MCF 10A (cell line): ENCODE measurements at regions of chr3 and their contacts with region 1.

Region 1: DNA sequence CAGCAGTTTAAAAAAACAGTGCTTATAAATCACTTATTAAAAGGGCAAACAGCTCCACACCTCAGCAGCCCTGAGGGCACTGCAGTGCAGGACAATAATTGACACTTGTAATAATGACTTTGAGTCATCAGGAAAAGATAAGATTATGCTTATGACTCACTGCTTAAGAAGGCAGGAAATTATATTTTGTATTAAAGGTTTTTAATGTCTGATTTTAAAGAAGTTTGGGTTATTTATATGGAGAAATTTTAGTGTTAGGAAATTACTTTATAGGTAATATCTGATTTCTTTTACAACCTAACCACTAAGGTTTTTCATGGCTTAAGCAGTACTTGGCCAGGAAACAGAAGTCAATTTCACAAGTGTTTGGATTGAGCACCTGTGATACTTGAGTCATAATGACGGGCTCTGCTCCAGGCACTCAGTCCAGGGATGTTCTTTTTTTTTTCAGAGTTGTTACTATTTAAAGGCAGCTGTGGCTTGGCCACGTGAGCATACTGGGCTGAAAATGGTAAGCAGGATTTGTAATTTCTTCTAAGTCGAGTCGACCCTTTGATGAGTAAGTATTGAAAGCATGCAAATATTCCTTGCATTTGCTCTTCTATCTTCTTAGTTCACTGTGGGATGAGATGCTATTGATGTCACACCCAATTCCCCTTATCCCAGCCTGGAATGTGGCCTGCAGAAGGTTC is 21.6 kb upstream of the SLC6A20 start:
- DNase-seq: peak; percentile 97
- H3K4me3 Mint-ChIP-seq: no peak overlapping the region
- H3K27ac Mint-ChIP-seq: peak overlapping the region; percentile 73
- H3K4me1 Mint-ChIP-seq: peaks cover 28% of the 10 kb centered on the region
- H3K27me3 Mint-ChIP-seq: no peaks in the 10 kb centered on the region
- CTCF ChIP-seq: no peak

Region 2: DNA sequence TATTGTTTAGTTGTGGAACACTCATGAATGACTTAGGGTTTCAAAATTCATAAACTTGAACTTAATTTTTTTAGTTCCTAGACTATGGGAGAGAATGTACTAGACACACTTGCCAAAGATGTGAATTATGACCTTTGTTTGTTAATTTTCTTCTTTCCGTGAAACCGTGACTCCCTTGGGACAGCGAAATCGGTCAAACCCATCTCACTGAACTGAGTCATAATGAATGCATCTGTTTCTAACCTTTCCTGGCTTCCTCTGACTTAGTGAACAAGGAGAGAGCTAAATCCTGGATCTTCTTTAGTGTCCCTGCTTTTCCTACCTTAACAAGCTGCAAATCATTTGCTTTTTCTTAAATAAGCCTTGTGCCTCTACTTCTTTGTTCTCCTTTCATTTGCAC is 344.1 kb before region 1 on chr3:
- CTCF ChIA-PET with region 1: no interaction called
- POLR2A ChIA-PET with region 1: no interaction called
- intact Hi-C with region 1: no loop called
- DNase-seq: peak; percentile 65
- H3K4me3 Mint-ChIP-seq: no peak overlapping the region
- H3K27ac Mint-ChIP-seq: no peak overlapping the region
- H3K4me1 Mint-ChIP-seq: peaks cover under 1% of the 10 kb centered on the region
- H3K27me3 Mint-ChIP-seq: no peaks in the 10 kb centered on the region
- CTCF ChIP-seq: no peak

Region 3: DNA sequence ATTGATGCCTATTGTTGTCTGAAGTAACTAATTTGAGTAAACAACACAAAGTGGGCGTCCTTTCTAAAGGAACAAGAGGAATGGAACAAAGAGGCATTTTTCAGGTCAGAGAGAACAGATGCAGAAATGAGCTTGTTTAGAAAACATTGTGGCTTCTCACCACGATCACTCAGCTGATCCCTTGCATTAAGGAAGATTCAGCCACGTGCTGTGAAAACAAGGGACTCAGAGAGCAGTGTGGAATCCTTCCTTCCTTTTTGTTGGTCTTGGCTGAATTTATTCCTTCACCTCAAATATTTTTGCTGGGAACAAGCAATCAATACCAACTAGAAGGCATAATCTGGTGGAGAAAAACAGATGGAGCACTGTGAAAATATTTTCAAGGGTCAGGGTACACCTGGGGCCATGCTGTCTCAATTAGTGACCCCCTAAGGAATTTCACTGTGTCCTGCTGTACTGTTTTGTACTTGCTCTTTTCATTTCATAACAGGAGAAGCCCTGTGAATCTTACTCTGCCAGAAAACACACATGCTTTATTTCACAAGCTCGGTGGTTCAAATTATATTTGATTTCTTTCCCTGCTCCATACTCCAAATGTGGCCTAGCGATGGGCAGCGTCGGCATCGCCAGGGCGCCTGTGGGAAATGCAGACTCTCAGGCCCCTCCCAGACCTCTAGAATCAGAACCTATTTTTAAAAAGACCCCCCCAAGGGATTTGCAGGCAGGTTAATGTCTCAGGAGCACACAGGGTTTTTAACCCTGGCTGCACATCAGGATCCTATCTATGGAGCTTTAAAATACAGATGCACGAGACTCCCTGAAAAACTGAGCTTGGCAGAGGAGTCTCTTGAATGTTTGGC is 10.1 kb before region 1 on chr3:
- CTCF ChIA-PET with region 1: interaction called, 4 read pairs
- POLR2A ChIA-PET with region 1: interaction called, 23 read pairs
- intact Hi-C with region 1: no loop called
- DNase-seq: no peak
- H3K4me3 Mint-ChIP-seq: no peak overlapping the region
- H3K27ac Mint-ChIP-seq: no peak overlapping the region
- H3K4me1 Mint-ChIP-seq: no peaks in the 10 kb centered on the region
- H3K27me3 Mint-ChIP-seq: no peaks in the 10 kb centered on the region
- CTCF ChIP-seq: no peak